WTC11 (cell line): ENCODE measurements at regions of chr7 and their contacts with region 1.

Region 1: DNA sequence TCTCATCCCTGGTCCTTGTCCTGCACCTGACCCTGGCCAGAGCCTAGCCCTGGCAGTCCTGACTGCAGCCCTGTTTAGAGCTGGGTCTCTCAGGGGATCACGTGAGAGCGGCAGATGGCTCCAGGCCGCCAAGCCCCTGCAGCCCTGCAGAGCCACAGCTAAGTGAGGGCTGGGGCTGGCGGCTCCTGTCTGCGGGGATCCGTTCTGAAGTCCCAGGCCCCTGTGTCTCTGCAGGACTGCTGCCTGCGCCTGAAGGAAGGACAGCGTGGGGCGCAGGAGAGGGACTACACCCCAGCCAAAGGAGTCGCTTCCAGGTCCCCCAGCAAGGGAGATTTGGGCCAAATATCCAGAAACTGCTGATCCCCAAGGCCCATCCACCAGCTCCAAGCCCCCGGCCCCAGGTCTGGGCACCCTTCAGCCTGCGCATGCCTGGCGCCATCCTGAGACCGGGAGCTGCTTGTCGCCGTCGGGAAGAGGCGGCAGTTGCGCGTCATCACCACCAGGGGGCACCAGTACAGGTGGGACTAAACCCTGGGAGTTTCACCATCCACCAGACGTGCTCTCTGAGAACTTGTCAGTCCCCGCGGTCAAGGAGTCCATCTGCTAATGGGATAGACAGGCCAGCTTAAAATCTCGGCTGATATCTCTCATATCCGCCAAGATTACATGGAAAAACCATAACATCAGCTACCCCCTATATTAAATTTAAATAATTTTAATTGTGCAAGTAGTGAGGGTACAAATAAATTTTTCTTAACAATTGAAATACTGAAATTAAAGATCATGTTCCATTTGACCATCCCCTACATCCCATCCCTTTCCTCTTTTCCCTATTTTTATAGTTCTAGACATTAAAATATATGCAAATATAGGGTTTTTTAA is 25.1 kb upstream of the GHRHR start:
- DNase-seq: peak; percentile 98
- ATAC-seq: peak; percentile 95
- H3K4me3 Mint-ChIP-seq: peak overlapping the region; percentile 47
- H3K27ac Mint-ChIP-seq: no peak overlapping the region
- H3K4me1 Mint-ChIP-seq: 0 out of 2 replicates have a peak, but pooled peaks cover 4% of the 10 kb centered on the region
- H3K27me3 Mint-ChIP-seq: no peaks in the 10 kb centered on the region; the same call in none of the 2 replicates
- CTCF ChIP-seq: peak; percentile 98

Region 2: DNA sequence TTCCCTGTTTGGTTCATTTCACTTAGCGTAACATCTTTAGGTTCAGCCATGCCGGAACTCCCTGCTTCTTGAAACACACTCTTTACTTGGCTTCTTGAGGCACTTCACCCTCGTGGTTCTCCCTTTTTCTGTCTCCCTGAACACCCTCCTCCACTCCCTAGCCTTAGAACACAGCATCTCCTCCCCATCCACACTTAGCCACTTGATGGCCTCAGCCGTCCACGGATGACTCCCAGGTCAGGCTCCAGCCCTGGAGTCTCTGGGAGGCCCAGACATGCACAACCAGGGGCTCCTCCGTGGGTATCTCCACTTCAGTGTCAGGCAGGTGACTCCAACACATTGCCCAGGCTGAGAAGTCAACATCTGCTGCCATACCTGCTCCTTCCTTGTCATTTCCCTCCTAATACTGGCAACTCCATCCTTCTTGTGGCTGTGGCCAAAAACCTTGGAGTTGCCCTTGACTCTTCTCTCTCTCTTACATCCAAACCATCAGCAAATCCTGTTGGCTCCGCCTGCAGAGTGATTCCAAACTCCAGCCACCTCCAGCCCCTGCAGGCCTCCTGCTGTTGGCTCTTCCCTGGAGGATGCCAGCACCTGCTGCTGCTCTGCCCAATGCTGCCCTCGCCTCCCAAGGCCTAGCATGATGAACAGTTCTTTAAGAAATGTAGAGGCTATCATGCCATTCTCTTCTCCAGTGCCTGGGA is 195.2 kb before region 1 on chr7:
- CTCF ChIA-PET with region 1: no interaction called
- POLR2A ChIA-PET with region 1: no interaction called
- DNase-seq: no peak
- ATAC-seq: no peak
- H3K4me3 Mint-ChIP-seq: no peak overlapping the region
- H3K27ac Mint-ChIP-seq: no peak overlapping the region; the same call in 1 of the 2 replicates
- H3K4me1 Mint-ChIP-seq: no peaks in the 10 kb centered on the region
- H3K27me3 Mint-ChIP-seq: no peaks in the 10 kb centered on the region; the same call in 1 of the 2 replicates
- CTCF ChIP-seq: no peak

Region 3: DNA sequence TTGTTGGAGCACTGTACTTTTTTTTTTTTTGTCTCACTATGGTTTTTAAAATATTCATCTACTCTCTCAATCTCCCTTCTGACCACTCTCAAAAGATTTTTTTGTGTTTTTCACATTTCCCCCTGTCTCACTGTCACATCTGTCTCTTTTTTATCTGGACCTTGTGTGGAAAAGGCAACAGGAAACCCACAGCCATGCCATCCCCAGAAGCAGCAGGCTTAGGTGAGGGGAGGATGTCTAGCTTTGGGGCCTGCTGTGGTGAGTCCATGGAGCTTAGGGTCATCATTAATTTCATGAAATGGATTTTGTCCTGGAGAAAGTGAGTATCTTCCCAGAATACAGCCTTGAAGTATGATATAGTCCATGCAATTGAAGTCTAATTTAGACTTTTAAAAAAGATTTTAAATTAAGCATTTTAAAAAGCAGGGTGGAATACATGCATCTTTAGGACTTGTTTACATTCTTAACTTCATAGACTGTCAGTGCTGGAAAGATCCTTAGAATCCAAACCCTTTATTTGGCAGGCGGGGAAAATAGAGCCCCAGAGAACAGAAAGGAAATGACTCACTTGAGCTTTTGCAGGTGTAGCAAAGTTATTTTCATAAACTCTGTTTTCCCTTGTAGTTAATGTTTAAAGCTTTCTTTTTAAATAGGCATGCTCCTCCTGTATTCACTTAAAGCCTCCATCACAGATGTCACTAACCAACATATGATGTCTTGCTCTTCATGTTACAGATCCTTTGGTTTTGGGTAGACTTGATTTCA is 142.4 kb before region 1 on chr7:
- CTCF ChIA-PET with region 1: interaction called, 14 read pairs
- POLR2A ChIA-PET with region 1: no interaction called
- DNase-seq: no peak
- ATAC-seq: no peak
- H3K4me3 Mint-ChIP-seq: no peak overlapping the region
- H3K27ac Mint-ChIP-seq: no peak overlapping the region
- H3K4me1 Mint-ChIP-seq: peaks cover under 1% of the 10 kb centered on the region; the same call in 1 of the 2 replicates
- H3K27me3 Mint-ChIP-seq: no peaks in the 10 kb centered on the region
- CTCF ChIP-seq: no peak

Region 4: DNA sequence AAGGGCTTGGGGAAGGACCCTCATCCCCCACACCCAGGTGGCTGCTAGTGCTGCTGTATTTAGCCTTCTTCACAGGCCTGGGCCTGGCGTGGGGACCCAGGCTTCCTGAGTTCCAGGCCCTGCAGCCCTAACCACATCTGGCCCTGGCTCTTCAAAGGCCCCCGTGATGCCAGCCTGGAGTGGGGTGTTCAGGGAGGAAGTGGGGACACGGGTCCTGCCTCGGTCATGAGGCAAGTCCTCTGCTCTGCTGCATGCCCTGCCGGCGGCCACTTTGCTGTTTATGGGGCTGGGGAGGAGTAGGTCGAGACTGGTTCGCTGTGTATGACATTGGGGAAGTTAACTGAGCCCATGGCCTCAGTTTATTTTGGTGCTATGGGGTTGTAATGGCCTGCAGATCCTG is 35.5 kb before region 1 on chr7:
- CTCF ChIA-PET with region 1: interaction called, 39 read pairs
- POLR2A ChIA-PET with region 1: no interaction called
- DNase-seq: no peak
- ATAC-seq: no peak
- H3K4me3 Mint-ChIP-seq: no peak overlapping the region
- H3K27ac Mint-ChIP-seq: no peak overlapping the region
- H3K4me1 Mint-ChIP-seq: no peaks in the 10 kb centered on the region
- H3K27me3 Mint-ChIP-seq: no peaks in the 10 kb centered on the region
- CTCF ChIP-seq: no peak

Region 5: GRCh38 chr7:30956704-30957103 is 18.0 kb after region 1 on chr7:
- CTCF ChIA-PET with region 1: interaction called, 21 read pairs
- POLR2A ChIA-PET with region 1: no interaction called
- DNase-seq: no peak
- ATAC-seq: no peak
- H3K4me3 Mint-ChIP-seq: no peak overlapping the region
- H3K27ac Mint-ChIP-seq: no peak overlapping the region
- H3K4me1 Mint-ChIP-seq: no peaks in the 10 kb centered on the region
- H3K27me3 Mint-ChIP-seq: peaks cover 14% of the 10 kb centered on the region
- CTCF ChIP-seq: no peak

Region 6: GRCh38 chr7:30988351-30989000 is 49.8 kb after region 1 on chr7:
- CTCF ChIA-PET with region 1: interaction called, 67 read pairs
- POLR2A ChIA-PET with region 1: interaction called, 5 read pairs
- DNase-seq: peak; percentile 50
- ATAC-seq: no peak
- H3K4me3 Mint-ChIP-seq: peak overlapping the region; percentile 12; the same call in 1 of the 2 replicates
- H3K27ac Mint-ChIP-seq: no peak overlapping the region
- H3K4me1 Mint-ChIP-seq: peaks cover 71% of the 10 kb centered on the region
- H3K27me3 Mint-ChIP-seq: peaks cover 7% of the 10 kb centered on the region
- CTCF ChIP-seq: no peak

Region 7: DNA sequence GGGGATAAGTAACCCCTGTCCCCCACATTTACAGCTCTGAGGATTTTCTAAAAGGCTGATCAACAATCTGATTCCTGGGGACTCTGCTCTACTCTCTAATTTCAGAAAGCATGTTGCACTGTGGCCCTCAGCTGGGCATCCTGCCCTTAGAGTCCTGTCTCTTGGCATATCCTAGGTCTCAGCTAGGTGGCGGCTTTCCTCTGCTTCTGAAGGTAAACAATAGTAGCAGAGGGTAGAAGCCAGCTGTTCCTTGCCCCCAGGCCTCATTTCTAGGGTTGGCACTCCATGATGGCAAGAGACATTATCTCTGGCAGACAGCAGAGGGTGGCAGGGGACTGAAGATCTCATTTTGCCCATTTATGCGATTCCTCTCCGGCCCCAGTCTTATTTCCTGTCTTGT is 190.4 kb after region 1 on chr7:
- CTCF ChIA-PET with region 1: interaction called, 80 read pairs
- POLR2A ChIA-PET with region 1: no interaction called
- DNase-seq: no peak
- ATAC-seq: peak; percentile 78
- H3K4me3 Mint-ChIP-seq: no peak overlapping the region
- H3K27ac Mint-ChIP-seq: no peak overlapping the region
- H3K4me1 Mint-ChIP-seq: no peaks in the 10 kb centered on the region
- H3K27me3 Mint-ChIP-seq: peaks cover 7% of the 10 kb centered on the region; the same call in 1 of the 2 replicates
- CTCF ChIP-seq: no peak